Activated CD4-positive, alpha-beta memory T cell treated with anti-CD3 and anti-CD28 coated beads for 36 hours (primary cell): ENCODE measurements at regions of chr2 and their contacts with region 1.

Region 1: GRCh38 chr2:68653538-68653982 is 10.2 kb downstream of the PROKR1 start:
- DNase-seq: peak; percentile 71
- H3K4me3 Mint-ChIP-seq: no peak overlapping the region
- H3K27ac Mint-ChIP-seq: peak overlapping the region; percentile 20
- H3K4me1 Mint-ChIP-seq: peaks cover 34% of the 10 kb centered on the region
- H3K27me3 Mint-ChIP-seq: peaks cover 20% of the 10 kb centered on the region

Region 2: GRCh38 chr2:68516051-68516955 is 137.3 kb before region 1 on chr2:
- CTCF ChIA-PET with region 1: no interaction called
- POLR2A ChIA-PET with region 1: no interaction called
- intact Hi-C with region 1: loop called (anchors 5 kb)
- DNase-seq: no peak
- H3K4me3 Mint-ChIP-seq: no peak overlapping the region
- H3K27ac Mint-ChIP-seq: no peak overlapping the region
- H3K4me1 Mint-ChIP-seq: peaks cover 8% of the 10 kb centered on the region
- H3K27me3 Mint-ChIP-seq: no peaks in the 10 kb centered on the region

Region 3: GRCh38 chr2:68637047-68637446 is 16.5 kb before region 1 on chr2:
- CTCF ChIA-PET with region 1: no interaction called
- POLR2A ChIA-PET with region 1: no interaction called
- intact Hi-C with region 1: no loop called
- DNase-seq: no peak
- H3K4me3 Mint-ChIP-seq: no peak overlapping the region
- H3K27ac Mint-ChIP-seq: no peak overlapping the region
- H3K4me1 Mint-ChIP-seq: no peaks in the 10 kb centered on the region
- H3K27me3 Mint-ChIP-seq: peaks cover 24% of the 10 kb centered on the region

Region 4: DNA sequence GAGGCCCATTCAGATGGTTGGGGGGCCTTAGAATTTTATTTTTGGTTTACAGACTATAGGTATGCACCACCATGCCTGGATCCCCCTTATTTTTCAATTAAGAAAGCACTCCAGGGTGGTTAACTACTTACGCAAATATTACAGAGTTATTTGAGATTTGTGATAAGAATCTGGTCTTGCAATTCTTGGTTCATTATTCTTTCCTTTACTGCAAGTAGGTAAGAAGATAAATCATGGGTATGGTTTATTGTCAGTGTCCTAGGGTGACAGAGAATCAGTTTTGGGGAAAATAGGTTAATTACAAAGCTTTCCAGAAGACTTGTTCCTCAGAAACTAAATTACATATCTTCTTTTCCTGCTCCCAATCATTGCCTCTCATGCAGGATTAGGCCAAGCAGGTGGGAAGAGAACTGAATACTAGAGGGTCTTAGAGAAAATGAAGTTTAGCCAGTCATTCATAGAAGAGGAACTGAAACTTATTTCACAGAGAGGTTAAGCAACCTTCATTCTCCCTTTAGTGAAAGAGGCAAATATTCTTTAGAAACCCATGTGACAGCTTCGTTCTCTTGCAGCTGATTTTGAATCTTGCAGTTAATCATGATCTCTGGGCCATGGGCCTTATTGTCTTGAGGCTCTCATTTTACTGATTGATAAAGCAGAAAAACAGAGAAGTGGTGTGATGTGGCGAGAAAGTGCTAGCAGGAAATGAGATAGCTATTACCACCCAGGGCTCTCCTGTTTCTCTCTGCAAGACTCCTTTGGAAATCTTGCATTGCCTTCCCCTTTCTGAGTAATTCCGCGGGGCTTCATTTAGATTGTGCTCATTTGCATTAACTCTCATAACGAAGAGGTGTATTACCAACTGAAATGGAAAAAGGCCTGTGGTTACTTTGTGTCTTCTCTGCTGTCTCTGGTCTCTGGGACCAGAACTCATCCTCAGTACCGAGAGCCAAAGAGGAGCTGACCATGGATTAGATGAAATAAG is 36.3 kb after region 1 on chr2:
- CTCF ChIA-PET with region 1: no interaction called
- POLR2A ChIA-PET with region 1: interaction called, 7 read pairs
- intact Hi-C with region 1: loop called (anchors 5 kb)
- DNase-seq: peak; percentile 28
- H3K4me3 Mint-ChIP-seq: no peak overlapping the region
- H3K27ac Mint-ChIP-seq: peak overlapping the region; percentile 26
- H3K4me1 Mint-ChIP-seq: peaks cover 18% of the 10 kb centered on the region
- H3K27me3 Mint-ChIP-seq: peaks cover 8% of the 10 kb centered on the region

Region 5: GRCh38 chr2:68828887-68829708 is 175.5 kb after region 1 on chr2:
- CTCF ChIA-PET with region 1: no interaction called
- POLR2A ChIA-PET with region 1: no interaction called
- intact Hi-C with region 1: loop called (anchors 5 kb)
- DNase-seq: peak; percentile 86
- H3K4me3 Mint-ChIP-seq: peak overlapping the region; percentile 21
- H3K27ac Mint-ChIP-seq: peak overlapping the region; percentile 79
- H3K4me1 Mint-ChIP-seq: peaks cover 64% of the 10 kb centered on the region
- H3K27me3 Mint-ChIP-seq: no peaks in the 10 kb centered on the region

Region 6: GRCh38 chr2:69054431-69054830 is 400.9 kb after region 1 on chr2:
- CTCF ChIA-PET with region 1: no interaction called
- POLR2A ChIA-PET with region 1: no interaction called
- intact Hi-C with region 1: loop called (anchors 10 kb)
- DNase-seq: peak; percentile 11
- H3K4me3 Mint-ChIP-seq: no peak overlapping the region
- H3K27ac Mint-ChIP-seq: no peak overlapping the region
- H3K4me1 Mint-ChIP-seq: peaks cover 12% of the 10 kb centered on the region
- H3K27me3 Mint-ChIP-seq: peaks cover 46% of the 10 kb centered on the region